ENCODE measurements at regions of chr14 and their contacts with region 1.

Region 1: GRCh38 chr14:33848706-33849454 is 102.0 kb downstream of the EGLN3 start:
- DNase-seq: peak; percentile 16
- H3K4me3 Mint-ChIP-seq: no peak overlapping the region
- H3K27ac Mint-ChIP-seq: no peak overlapping the region
- H3K4me1 Mint-ChIP-seq: peaks cover 2% of the 10 kb centered on the region
- H3K27me3 Mint-ChIP-seq: peaks cover 15% of the 10 kb centered on the region

Region 2: GRCh38 chr14:33859306-33859705 is 10.4 kb after region 1 on chr14:
- CTCF ChIA-PET with region 1: interaction called, 13 read pairs
- POLR2A ChIA-PET with region 1: no interaction called
- DNase-seq: no peak
- H3K4me3 Mint-ChIP-seq: no peak overlapping the region
- H3K27ac Mint-ChIP-seq: no peak overlapping the region
- H3K4me1 Mint-ChIP-seq: peaks cover 24% of the 10 kb centered on the region
- H3K27me3 Mint-ChIP-seq: peaks cover 28% of the 10 kb centered on the region

Region 3: DNA sequence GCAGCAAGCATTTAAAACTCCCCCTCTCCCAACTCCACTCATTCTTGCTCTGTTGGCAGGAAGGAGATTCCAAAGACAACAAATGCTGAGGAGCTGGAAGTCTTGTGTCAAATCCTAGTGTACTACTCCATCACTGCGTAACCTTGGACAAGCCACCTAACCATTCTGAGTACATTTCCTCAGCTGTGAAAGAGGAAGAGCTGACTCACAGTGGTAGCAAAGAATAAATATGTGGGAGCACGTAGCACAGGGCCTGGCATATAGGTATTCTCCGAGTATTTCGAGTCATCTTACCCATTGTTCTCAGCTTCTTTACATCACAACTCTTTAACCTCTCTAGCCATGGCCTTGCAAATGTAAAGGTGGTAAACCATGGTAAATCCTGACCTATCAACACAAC is 73.2 kb after region 1 on chr14:
- CTCF ChIA-PET with region 1: no interaction called
- POLR2A ChIA-PET with region 1: no interaction called
- DNase-seq: no peak
- H3K4me3 Mint-ChIP-seq: no peak overlapping the region
- H3K27ac Mint-ChIP-seq: no peak overlapping the region
- H3K4me1 Mint-ChIP-seq: peaks cover 9% of the 10 kb centered on the region
- H3K27me3 Mint-ChIP-seq: no peaks in the 10 kb centered on the region

Region 4: GRCh38 chr14:33972583-33973081 is 123.8 kb after region 1 on chr14:
- CTCF ChIA-PET with region 1: no interaction called
- POLR2A ChIA-PET with region 1: no interaction called
- DNase-seq: no peak
- H3K4me3 Mint-ChIP-seq: no peak overlapping the region
- H3K27ac Mint-ChIP-seq: no peak overlapping the region
- H3K4me1 Mint-ChIP-seq: peaks cover 7% of the 10 kb centered on the region
- H3K27me3 Mint-ChIP-seq: peaks cover 36% of the 10 kb centered on the region